Ascending aorta (tissue), 2 donors: ENCODE measurements at regions of chr15 and their contacts with region 1.

Region 1: GRCh38 chr15:54312528-54312927 is 334.3 kb downstream of the UNC13C start:
- DNase-seq: no peak
- H3K4me3 ChIP-seq: no peak overlapping the region
- H3K27ac ChIP-seq: no peak overlapping the region
- H3K4me1 ChIP-seq: no peaks in the 10 kb centered on the region
- H3K27me3 ChIP-seq: no peaks in the 10 kb centered on the region
- CTCF ChIP-seq: no peak

Region 2: GRCh38 chr15:54250326-54250725 is 62.2 kb before region 1 on chr15:
- intact Hi-C with region 1: loop called (anchors 10 kb)
- DNase-seq: no peak
- H3K4me3 ChIP-seq: no peak overlapping the region
- H3K27ac ChIP-seq: no peak overlapping the region
- H3K4me1 ChIP-seq: no peaks in the 10 kb centered on the region
- H3K27me3 ChIP-seq: no peaks in the 10 kb centered on the region
- CTCF ChIP-seq: no peak